ENCODE measurements at regions of chr14 and their contacts with region 1.

Region 1: DNA sequence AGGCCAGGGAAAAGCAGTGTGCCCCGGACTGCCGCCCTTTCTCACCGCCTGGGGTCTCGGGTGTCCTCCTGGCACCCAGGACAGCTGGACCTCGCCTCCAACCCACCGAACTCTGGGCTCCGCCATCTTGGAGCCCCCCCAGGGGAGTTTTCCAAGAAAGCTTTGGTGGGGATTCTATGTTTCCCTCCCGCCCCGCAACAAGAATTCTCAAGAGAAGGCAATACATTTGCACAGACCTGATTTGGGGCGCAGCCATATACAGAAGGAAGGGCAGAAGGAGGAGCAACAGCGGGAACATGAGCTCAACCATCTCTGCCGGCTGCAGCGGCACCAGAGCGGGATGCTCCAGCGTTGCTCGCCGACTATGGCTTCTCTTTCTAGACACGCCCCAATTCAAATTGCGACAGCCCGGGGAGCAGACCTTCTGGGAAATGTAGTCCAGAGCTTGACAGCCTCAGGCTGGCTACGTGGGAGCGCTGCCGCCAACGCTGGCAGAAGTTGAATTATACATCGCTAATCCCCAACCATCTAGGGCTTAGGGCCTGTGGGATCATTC is at the start of gene RDH11:
- DNase-seq: peak; percentile 80
- H3K4me3 Mint-ChIP-seq: peak within 1 kb of the TSS; percentile 95
- H3K27ac Mint-ChIP-seq: peak within 1 kb of the TSS; percentile 98
- H3K4me1 Mint-ChIP-seq: peaks cover 42% of the 10 kb centered on the region
- H3K27me3 Mint-ChIP-seq: no peaks in the 10 kb centered on the region
- total RNA-seq, gene RDH11: 63.2 and 66.1 TPM in 2 replicates

Region 2: DNA sequence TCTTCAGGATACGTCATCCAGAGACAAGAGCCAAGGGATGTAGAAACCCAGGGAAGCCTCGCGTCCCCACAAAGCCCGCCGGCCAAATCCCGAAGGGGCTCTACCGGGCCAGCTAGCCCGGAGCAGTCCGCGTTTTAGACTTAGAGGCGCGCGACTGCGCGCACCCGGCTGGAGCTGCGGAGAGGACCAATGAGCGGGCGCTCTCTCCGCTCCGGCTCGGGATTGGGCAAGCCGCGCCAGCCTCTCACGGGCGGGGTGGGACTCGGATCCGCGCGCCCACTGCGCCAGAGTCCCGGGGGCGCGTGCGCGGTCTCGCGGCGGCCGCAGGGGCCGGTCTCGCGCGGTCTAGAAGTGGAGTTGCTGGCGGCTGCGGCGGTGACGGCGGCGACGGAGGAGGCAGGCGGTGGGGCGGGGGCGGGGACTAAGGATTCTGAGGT is 454.5 kb before region 1 on chr14:
- intact Hi-C with region 1: loop called (anchors 5 kb)
- DNase-seq: peak; percentile 92
- H3K4me3 Mint-ChIP-seq: peak overlapping the region; percentile 87
- H3K27ac Mint-ChIP-seq: peak overlapping the region; percentile 80
- H3K4me1 Mint-ChIP-seq: peaks cover 18% of the 10 kb centered on the region
- H3K27me3 Mint-ChIP-seq: peaks cover 20% of the 10 kb centered on the region

Region 3: DNA sequence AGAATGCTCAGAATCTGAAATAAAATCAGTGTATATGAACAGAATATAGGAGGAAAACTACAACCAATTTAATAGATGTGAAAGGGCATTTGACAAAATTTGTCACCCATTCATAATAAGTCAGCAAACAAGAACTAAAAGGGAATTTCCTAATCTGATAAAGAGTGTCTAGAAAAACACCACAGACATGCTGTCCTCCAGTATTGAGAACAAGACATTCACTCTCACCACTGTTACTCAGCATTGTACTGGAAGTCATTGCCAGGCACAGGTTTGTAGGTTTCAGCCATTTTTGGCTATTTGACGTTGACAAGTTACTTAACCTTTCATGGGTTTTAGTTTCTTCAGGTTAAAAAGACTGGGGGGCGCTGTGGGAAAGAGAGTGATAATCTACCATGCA is 322.1 kb before region 1 on chr14:
- intact Hi-C with region 1: loop called (anchors 5 kb)
- DNase-seq: no peak
- H3K4me3 Mint-ChIP-seq: no peak overlapping the region
- H3K27ac Mint-ChIP-seq: peak overlapping the region; percentile 14
- H3K4me1 Mint-ChIP-seq: peaks cover 40% of the 10 kb centered on the region
- H3K27me3 Mint-ChIP-seq: no peaks in the 10 kb centered on the region

Region 4: DNA sequence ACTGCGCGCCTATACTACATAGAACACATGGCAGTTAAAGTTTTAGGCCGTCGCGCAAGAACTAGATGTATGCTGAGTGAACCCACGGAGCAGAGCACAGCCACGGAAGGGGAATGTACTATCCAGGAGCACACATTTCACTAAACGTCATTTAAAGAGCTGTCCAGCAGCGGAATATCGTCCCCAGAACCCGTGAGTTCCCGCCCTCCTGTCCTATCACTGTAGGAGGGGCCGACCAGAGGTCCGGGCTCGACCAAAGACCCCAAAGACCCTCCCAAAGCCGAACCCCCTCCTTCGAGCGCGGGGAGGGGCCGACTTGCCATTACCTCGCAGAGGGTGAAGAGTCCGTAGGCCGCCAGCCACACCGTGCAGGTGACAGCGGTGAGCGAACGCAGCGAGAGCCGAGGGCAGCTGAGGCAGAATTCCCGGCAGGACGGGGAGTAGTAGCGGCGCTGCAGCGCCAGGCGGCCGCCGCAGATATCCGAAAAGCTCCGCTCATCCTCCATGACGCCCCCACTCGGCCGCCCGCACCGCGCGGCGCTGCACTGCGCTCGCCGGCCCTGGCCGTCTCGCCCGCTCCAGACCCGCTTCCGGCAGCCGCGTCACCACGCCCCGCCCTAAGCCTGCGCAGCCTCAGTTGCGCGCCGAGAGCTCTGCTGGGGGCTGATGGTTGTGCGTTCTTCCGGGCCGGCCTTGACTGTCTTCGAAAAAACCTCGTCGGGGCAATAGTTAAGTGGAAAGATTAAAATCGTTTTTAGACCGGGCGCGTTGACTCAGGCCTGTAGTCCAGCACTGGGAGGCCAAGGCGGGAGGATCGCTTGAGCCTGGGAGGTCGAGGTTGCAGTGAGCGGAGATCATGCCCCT is 95.5 kb before region 1 on chr14 and contains the start of gene PIGH:
- intact Hi-C with region 1: loop called (anchors 1 kb)
- DNase-seq: peak; percentile 92
- H3K4me3 Mint-ChIP-seq: peak within 1 kb of the TSS; percentile 99
- H3K27ac Mint-ChIP-seq: peak within 1 kb of the TSS; percentile 94
- H3K4me1 Mint-ChIP-seq: peaks cover 44% of the 10 kb centered on the region
- H3K27me3 Mint-ChIP-seq: peaks cover 18% of the 10 kb centered on the region
- total RNA-seq, gene PIGH: 22.7 and 26.0 TPM in 2 replicates

Region 5: DNA sequence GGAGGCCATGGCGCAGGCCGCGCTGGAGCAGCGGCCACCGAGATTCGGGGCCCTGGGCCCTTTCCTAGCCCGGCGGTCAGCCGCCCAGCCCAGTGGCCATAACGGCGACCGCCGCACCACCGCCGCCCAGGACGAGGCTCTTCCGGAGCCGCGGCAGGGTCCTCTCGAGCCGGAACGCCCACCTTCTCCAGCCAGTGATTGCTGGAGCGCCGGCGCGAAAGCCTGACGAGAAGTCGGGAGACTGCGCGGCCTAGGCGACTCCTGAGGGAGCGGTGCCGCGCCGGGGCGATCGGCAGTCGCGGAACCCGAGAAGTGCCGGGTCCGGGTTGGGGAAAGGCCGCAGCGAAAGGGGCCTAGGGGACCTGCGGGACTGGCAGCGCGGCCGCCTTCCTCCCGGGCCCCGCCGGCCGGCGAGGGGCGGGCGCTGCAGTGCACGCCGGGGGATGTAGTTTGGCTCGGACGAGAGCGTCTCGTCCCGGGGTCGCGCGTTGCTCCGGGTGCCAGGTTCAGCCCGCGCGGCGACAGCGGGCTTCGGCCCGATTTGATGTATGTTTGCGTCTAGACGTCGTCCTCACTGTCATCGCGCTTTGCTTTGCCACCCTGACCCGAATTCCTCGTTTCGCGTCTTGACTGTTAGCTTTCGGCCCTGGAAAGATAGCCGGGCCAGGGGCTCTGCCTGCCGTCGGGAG is 20.8 kb before region 1 on chr14 and contains the start of gene VTI1B:
- intact Hi-C with region 1: loop called (anchors 1 kb)
- DNase-seq: peak; percentile 70
- H3K4me3 Mint-ChIP-seq: peak within 1 kb of the TSS; percentile 90
- H3K27ac Mint-ChIP-seq: peak within 1 kb of the TSS; percentile 87
- H3K4me1 Mint-ChIP-seq: peaks cover 41% of the 10 kb centered on the region
- H3K27me3 Mint-ChIP-seq: no peaks in the 10 kb centered on the region
- total RNA-seq, gene VTI1B: 77.7 and 77.8 TPM in 2 replicates

Region 6: GRCh38 chr14:67710209-67710608 is 14.7 kb after region 1 on chr14:
- intact Hi-C with region 1: no loop called
- DNase-seq: no peak
- H3K4me3 Mint-ChIP-seq: no peak overlapping the region
- H3K27ac Mint-ChIP-seq: no peak overlapping the region
- H3K4me1 Mint-ChIP-seq: no peaks in the 10 kb centered on the region
- H3K27me3 Mint-ChIP-seq: peaks cover 2% of the 10 kb centered on the region